ENCODE measurements at regions of chr6 and their contacts with region 1.

Region 1: DNA sequence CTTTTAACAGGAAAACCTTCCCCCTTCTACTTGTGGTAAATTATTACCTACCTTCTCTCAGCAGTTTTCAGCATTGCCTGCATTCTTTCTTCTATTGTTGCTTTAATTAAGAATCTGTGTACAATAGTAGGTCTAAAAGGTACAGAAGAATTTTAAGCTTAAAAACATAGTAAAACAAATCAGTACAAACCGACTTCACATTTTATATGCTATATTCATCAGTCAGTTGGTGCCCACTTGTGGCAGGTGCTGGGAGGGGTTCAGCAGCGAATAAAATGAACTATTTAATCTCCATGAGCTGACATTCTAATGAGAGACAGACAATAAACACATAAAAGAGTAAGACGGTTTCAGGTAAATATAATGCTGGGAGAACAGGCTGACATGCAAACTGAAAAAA is 73.4 kb upstream of the FBXO30 start:
- DNase-seq: no peak
- ATAC-seq: peak; percentile 70
- H3K4me3 ChIP-seq: no peak overlapping the region
- H3K27ac ChIP-seq: no peak overlapping the region
- H3K4me1 ChIP-seq: no peaks in the 10 kb centered on the region
- H3K27me3 ChIP-seq: no peaks in the 10 kb centered on the region
- CTCF ChIP-seq: peak; percentile 56 to 65 (median 62); a peak in 5 of 6 replicates
- EP300 ChIP-seq: no peak
- POLR2A ChIP-seq: no peak
- RAD21 ChIP-seq: peak; percentile 77

Region 2: DNA sequence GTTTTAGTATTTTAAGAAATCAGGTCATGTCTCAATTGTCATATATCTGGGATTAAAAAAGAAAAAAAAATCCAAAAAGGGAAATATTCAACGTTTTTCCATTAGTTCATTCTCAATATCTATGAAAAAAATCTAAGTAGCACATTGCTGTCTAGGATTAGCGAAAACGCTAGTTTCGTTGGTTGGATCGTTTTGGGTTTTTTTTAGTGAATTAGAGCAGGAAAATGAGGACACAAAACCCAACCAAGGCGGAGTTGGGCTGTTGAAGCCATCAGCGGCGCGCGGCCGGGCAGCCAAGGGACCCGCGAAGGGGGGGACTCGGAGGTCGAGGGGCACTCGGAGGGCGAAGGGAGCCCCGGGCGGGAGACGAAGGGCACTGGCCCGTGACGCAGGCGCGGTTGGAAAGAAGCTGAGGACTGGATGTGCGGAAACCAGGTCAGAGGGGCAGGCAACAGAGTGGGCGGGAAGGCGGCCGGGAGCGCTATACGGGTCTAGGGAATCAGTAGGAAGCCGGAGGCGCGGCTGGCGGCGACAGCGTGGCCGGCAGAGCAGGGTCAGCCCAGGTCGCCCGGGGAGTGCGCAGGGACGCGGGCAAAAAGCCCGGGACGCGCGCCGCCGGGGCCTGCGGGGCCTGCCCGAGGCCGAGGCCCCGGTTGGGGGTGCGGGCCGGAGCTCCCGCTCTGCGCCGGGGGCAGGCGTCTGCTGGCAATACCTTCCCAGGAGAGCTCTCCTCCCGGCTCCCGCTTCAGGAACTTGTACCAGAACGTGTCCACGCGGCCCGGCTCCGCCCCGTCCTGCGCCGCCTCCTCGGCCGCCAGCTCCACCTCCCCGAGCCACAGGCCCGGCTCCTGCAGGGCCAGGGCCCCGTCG is 153.2 kb before region 1 on chr6:
- CTCF ChIA-PET with region 1: interaction called, 10 read pairs
- POLR2A ChIA-PET with region 1: no interaction called
- RAD21 ChIA-PET with region 1: interaction called, 5 read pairs
- SMC1A ChIA-PET with region 1: interaction called, 5 read pairs
- in situ Hi-C with region 1: no loop called
- intact Hi-C with region 1: no loop called
- DNase-seq: no peak
- ATAC-seq: peak; percentile 79
- H3K4me3 ChIP-seq: peak overlapping the region; percentile 95
- H3K27ac ChIP-seq: peak overlapping the region; percentile 83
- H3K4me1 ChIP-seq: no peaks in the 10 kb centered on the region; the same call in 1 of the 2 replicates
- H3K27me3 ChIP-seq: no peaks in the 10 kb centered on the region
- CTCF ChIP-seq: no peak
- EP300 ChIP-seq: 0 out of 4 replicates have a peak, but pooled peaks of 1 of the 2 experiments have one; percentile 20
- POLR2A ChIP-seq: peak; percentile 77
- RAD21 ChIP-seq: no peak

Region 3: GRCh38 chr6:145761584-145761983 is 126.4 kb before region 1 on chr6:
- CTCF ChIA-PET with region 1: interaction called, 3 read pairs
- POLR2A ChIA-PET with region 1: no interaction called
- RAD21 ChIA-PET with region 1: interaction called, 4 read pairs
- SMC1A ChIA-PET with region 1: interaction called, 5 read pairs
- in situ Hi-C with region 1: no loop called
- intact Hi-C with region 1: loop called (anchors 1 kb)
- DNase-seq: no peak
- ATAC-seq: peak; percentile 74
- H3K4me3 ChIP-seq: no peak overlapping the region
- H3K27ac ChIP-seq: no peak overlapping the region
- H3K4me1 ChIP-seq: no peaks in the 10 kb centered on the region
- H3K27me3 ChIP-seq: no peaks in the 10 kb centered on the region
- CTCF ChIP-seq: peak; percentile 23 to 43 (median 38); a peak in 5 of 6 replicates
- EP300 ChIP-seq: no peak
- POLR2A ChIP-seq: no peak
- RAD21 ChIP-seq: peak; percentile 57; the same call in 1 of the 2 replicates

Region 4: GRCh38 chr6:145850671-145851070 is 37.3 kb before region 1 on chr6:
- CTCF ChIA-PET with region 1: no interaction called
- POLR2A ChIA-PET with region 1: no interaction called
- RAD21 ChIA-PET with region 1: no interaction called
- SMC1A ChIA-PET with region 1: no interaction called
- in situ Hi-C with region 1: no loop called
- intact Hi-C with region 1: no loop called
- DNase-seq: no peak
- ATAC-seq: no peak
- H3K4me3 ChIP-seq: no peak overlapping the region
- H3K27ac ChIP-seq: no peak overlapping the region
- H3K4me1 ChIP-seq: no peaks in the 10 kb centered on the region
- H3K27me3 ChIP-seq: no peaks in the 10 kb centered on the region
- CTCF ChIP-seq: no peak
- EP300 ChIP-seq: no peak
- POLR2A ChIP-seq: no peak
- RAD21 ChIP-seq: no peak

Region 5: DNA sequence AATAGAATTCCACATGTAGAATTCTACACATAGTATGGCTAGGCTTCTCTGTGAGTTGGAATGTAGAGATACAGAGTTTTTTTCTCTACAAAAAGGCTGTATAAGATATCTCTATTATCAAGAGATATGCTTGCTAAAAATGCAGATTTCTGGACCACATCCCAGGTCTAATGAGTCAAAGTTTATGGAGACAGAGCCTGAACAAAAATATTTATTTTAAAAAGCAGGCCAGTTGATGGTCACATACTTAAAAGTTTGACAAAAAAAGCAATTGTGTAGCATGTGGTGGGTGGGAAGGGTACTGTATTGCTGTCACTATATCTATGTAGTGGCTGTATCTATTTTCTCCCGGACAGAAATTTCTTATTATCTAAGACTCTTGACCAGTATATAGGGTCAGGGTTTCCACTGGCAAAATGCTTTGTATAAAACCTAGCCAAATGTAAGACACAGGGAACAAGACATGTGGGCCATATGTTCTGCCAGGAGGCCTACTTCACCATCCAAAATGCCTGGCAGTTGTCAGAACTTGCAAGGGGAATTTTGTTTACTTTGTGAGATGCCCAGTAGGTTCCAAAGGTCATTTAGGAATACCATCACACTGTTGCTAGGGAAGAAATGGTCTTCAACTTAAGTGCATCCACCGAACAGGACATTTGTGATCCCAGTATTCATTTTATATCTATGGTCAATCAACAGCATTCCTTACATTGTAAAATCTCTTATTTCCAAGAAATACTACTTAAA is 15.6 kb after region 1 on chr6:
- CTCF ChIA-PET with region 1: no interaction called
- POLR2A ChIA-PET with region 1: no interaction called
- RAD21 ChIA-PET with region 1: no interaction called
- SMC1A ChIA-PET with region 1: no interaction called
- in situ Hi-C with region 1: no loop called
- intact Hi-C with region 1: no loop called
- DNase-seq: no peak
- ATAC-seq: no peak
- H3K4me3 ChIP-seq: no peak overlapping the region
- H3K27ac ChIP-seq: no peak overlapping the region
- H3K4me1 ChIP-seq: peaks cover 4% of the 10 kb centered on the region
- H3K27me3 ChIP-seq: no peaks in the 10 kb centered on the region
- CTCF ChIP-seq: no peak
- EP300 ChIP-seq: no peak
- POLR2A ChIP-seq: no peak
- RAD21 ChIP-seq: no peak

Region 6: GRCh38 chr6:146028293-146028691 is 140.3 kb after region 1 on chr6:
- CTCF ChIA-PET with region 1: no interaction called
- POLR2A ChIA-PET with region 1: no interaction called
- RAD21 ChIA-PET with region 1: no interaction called
- SMC1A ChIA-PET with region 1: no interaction called
- in situ Hi-C with region 1: no loop called
- intact Hi-C with region 1: no loop called
- DNase-seq: no peak
- ATAC-seq: peak; percentile 81
- H3K4me3 ChIP-seq: no peak overlapping the region
- H3K27ac ChIP-seq: no peak overlapping the region
- H3K4me1 ChIP-seq: no peaks in the 10 kb centered on the region
- H3K27me3 ChIP-seq: peaks cover 0 to 4% of the 10 kb centered on the region in 2 experiments; a peak in 3 of 4 replicates
- CTCF ChIP-seq: no peak
- EP300 ChIP-seq: no peak
- POLR2A ChIP-seq: no peak
- RAD21 ChIP-seq: no peak